ENCODE measurements at regions of chr20 and their contacts with region 1.

Region 1: DNA sequence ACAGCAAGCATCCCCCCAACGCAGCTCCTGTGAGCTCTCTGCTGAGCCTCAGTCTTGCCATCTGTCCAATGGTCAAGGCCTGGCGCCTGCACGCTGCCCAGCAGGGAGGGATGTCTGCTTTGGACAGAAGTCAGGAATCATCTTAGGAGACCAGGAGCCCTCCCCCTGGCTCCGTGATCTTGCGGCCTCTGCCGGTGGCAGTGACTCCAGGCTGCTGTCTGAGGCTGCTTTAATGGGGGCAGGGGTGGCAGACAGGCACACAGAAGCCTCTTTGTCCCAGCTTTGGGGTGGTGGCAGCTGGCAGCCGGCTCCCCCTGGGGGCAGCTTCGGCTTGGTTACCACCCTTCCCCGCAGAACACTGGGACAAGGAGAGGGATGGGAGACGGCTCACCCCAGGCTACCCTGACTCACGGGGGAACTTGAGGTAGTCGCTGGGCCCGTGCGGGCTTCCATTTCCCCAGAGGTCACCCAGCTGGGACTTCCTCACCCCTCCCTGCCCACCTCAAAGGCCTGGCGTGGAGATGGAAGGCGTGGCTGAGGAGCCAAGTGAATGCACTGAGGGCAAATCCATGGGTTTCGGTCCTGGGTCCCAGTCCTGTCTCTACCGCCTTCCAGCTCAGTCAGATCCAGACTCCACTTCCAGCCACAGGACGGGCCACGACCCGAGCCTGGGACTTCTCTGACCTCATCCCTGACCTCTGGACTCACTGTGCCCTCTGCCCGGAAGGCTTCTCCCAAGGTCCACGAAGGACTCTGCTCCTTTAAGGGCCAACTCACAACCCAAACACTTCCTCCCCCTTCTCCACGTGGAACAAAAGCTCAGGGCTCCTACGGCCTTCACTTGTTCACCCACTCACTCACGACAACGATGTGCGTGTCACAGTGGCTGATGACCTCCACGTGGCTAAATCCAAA is 14.8 kb downstream of the PEDS1 start:
- DNase-seq: no peak
- H3K4me3 ChIP-seq: no peak overlapping the region
- H3K27ac ChIP-seq: peak overlapping the region; percentile 38; the same call in 1 of the 2 replicates
- H3K4me1 ChIP-seq: peaks cover 5 to 17% (median 8%) of the 10 kb centered on the region in 4 experiments
- H3K27me3 ChIP-seq: no peaks in the 10 kb centered on the region
- CTCF ChIP-seq: peak; percentile 24 to 45 (median 41); a peak in 3 of 4 replicates
- EP300 ChIP-seq: no peak
- POLR2A ChIP-seq: no peak
- RAD21 ChIP-seq: no peak; a peak in 1 of 4 replicates

Region 2: GRCh38 chr20:50153485-50154377 is 15.0 kb after region 1 on chr20 and contains the start of gene PEDS1:
- CTCF ChIA-PET with region 1: interaction called, 28 read pairs
- POLR2A ChIA-PET with region 1: interaction called, 40 read pairs
- DNase-seq: peak in 1 of 2 experiments; percentile 87
- H3K4me3 ChIP-seq: peak within 1 kb of the TSS; percentile 61 to 98 (median 86)
- H3K27ac ChIP-seq: peak within 1 kb of the TSS; percentile 26; the same call in 1 of the 2 replicates
- H3K4me1 ChIP-seq: peaks cover 9 to 27% (median 16%) of the 10 kb centered on the region in 4 experiments
- H3K27me3 ChIP-seq: peaks cover 0 to 3% (median under 1%) of the 10 kb centered on the region in 4 experiments; a peak in 2 of 7 replicates
- CTCF ChIP-seq: no peak
- EP300 ChIP-seq: no peak
- POLR2A ChIP-seq: peak; percentile 70 to 75
- RAD21 ChIP-seq: no peak
- total RNA-seq, gene PEDS1: 28.9 and 33.3 TPM in 2 replicates

Measured in H1 (cell line).